Activated CD4-positive, alpha-beta T cell treated with anti-CD3 and anti-CD28 coated beads for 36 hours (primary cell): ENCODE measurements at regions of chr17 and their contacts with region 1.

Region 1: GRCh38 chr17:60392042-60392844 is at the start of gene USP32:
- DNase-seq: peak; percentile 99
- ATAC-seq: peak; percentile 93
- H3K4me3 Mint-ChIP-seq: peak within 1 kb of the TSS; percentile 77
- H3K27ac Mint-ChIP-seq: peak within 1 kb of the TSS; percentile 99
- H3K4me1 Mint-ChIP-seq: peaks cover 41% of the 10 kb centered on the region
- H3K27me3 Mint-ChIP-seq: no peaks in the 10 kb centered on the region
- total RNA-seq, gene USP32: 32.3 to 33.1 TPM

Region 2: DNA sequence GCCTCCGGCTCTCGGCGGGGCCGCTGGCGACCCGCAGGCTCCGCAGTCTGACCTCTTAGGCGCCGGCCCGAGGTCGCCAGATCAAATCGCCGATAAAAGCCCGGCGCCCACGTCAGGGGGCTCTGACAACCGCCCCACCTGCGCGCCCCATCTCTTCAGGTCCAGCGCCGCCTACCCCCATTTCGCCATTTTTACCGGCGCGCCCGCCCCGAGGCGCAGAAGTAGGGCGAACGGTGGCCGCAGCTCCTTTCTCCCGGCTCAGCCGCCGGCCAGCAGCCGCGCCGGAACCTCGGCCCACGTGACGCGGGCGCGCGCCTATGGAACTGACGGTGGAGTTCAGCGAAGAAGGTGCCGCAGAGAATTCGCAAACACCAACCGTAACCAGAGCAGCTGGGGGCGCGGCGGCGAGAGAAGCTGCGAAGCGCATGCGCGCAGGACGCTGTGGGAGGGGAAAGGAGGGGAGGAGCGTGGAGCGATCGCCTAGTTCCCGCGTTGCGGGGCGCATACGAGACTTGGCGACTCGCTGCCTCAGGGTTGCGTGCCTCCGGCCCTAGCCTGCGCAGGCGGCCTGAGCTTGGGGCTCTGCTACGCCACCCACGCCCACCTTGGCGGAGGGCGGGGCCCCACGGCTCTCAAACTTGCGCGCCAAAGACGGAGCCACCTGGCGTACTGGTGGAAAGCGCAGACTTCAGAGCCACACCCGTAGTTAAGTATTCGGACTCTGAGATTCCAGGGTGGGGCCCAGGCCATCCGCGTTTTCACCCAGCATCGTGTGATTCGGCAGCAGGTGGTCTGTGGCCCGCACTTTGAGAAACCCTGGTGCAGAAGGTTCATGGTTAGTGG is 1285.6 kb before region 1 on chr17 and contains the start of gene TRIM37:
- CTCF ChIA-PET with region 1: no interaction called
- POLR2A ChIA-PET with region 1: no interaction called
- intact Hi-C with region 1: loop called in 1 of 2 experiments (anchors 1 kb)
- DNase-seq: peak; percentile 99
- ATAC-seq: peak; percentile 95
- H3K4me3 Mint-ChIP-seq: peak within 1 kb of the TSS; percentile 85
- H3K27ac Mint-ChIP-seq: peak within 1 kb of the TSS; percentile 92
- H3K4me1 Mint-ChIP-seq: peaks cover 49% of the 10 kb centered on the region
- H3K27me3 Mint-ChIP-seq: no peaks in the 10 kb centered on the region
- total RNA-seq, gene TRIM37: 21.3 to 22.7 TPM

Region 3: DNA sequence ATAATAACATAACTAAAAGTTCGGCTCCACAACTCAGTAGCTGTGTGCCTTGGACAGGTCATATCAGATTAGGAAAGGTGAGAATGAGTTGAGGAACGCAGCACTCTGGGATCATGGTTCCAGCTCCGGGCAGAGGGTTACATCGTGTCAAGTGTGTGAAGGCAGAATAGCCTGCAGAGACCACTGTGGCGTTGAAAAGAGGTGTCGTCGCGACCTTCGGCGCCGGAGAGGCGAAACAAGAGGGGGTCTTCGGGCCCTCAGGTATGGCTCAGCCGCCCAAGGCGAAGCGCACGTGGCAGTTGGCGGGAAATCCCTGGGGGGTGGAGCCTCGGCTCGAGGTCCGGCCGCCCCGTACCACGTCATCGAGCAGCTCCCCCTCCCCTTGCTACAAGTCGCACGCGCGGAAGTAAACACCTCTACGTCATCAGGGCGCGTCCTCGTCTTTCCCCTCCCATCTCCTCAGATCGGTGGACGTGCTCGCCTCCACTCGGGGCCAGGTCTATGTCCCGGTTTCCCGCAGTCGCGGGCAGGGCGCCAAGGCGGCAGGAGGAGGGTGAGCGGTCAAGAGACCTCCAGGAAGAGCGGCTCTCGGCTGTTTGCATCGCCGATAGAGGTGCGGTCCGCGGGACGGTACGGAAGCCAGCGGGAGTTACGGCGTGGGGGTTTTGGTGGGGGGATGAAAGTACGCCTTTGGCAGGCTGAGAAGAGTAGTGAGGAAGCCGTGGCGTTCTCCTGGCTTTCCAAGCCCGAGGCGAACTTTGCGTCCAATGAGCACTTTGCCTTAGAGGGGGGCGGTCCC is 826.9 kb before region 1 on chr17 and contains the start of gene DHX40:
- CTCF ChIA-PET with region 1: no interaction called
- POLR2A ChIA-PET with region 1: no interaction called
- intact Hi-C with region 1: loop called in 1 of 2 experiments (anchors 1 kb)
- DNase-seq: peak; percentile 98
- ATAC-seq: peak; percentile 89
- H3K4me3 Mint-ChIP-seq: peak within 1 kb of the TSS; percentile 99
- H3K27ac Mint-ChIP-seq: peak within 1 kb of the TSS; percentile 99
- H3K4me1 Mint-ChIP-seq: peaks cover 20% of the 10 kb centered on the region
- H3K27me3 Mint-ChIP-seq: no peaks in the 10 kb centered on the region
- total RNA-seq, gene DHX40: 22.9 to 24.1 TPM

Region 4: DNA sequence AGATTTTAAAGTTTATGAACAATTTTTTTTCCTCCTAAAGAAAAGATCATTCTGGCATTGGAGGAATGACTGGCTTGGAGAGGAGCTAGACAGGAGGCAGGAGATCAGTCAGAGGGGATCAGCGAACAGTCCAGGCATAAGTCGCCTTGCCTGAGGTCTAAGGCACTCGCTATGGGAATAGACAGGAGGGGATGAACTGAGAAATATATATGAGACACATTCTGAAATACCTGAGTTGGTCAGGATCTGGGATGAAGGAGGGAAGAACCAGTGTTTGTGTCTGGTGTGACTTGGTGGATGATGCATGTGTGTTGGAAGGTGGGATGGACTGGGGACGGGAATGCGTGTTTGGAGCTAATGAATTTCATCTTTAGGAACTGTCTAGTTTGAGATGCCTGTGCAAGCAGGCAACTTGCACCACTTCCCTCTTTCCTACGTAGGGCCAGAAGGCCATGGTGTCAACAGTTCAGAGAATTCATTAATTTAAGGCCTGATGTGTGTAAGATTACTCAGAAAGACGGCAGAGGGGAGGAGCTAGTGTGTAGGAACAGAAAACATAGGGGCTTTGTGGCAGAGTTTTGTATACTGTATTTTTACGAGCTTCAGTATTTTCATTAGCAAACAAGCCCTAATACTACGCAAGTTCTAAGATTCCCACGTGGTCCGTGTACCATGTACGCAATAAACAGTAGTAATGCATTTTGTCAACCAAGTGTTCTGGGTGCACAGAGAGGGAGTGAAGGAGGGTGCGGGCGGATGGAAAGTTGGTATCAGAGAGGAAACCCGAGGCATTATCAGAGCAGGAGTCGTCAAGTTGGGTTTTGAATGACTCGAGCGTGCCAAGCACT is 314.3 kb before region 1 on chr17:
- CTCF ChIA-PET with region 1: no interaction called
- POLR2A ChIA-PET with region 1: no interaction called
- intact Hi-C with region 1: loop called in 1 of 2 experiments (anchors 1 kb)
- DNase-seq: peak; percentile 81
- ATAC-seq: peak; percentile 73
- H3K4me3 Mint-ChIP-seq: peak overlapping the region; percentile 84
- H3K27ac Mint-ChIP-seq: peak overlapping the region; percentile 95
- H3K4me1 Mint-ChIP-seq: peaks cover 19% of the 10 kb centered on the region
- H3K27me3 Mint-ChIP-seq: no peaks in the 10 kb centered on the region

Region 5: DNA sequence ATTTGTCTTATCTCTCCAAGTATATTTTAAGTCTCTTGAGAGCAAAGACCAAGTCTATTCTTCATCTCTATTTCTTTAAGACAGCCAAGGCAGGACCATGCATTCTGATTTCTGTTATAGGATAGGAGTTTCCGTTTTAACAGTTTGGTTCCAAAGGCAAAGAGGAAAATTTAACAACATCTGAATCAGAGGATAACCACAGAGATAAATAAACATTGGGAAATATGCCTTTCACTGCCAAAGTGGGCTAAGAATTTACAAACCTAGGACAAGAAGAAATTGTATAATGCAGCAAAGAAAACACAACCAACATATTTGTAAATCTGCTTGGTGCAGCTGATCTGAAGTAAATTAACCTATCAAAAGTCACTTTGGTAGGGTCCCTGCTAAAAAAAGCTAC is 38.0 kb before region 1 on chr17:
- CTCF ChIA-PET with region 1: interaction called, 3 read pairs
- POLR2A ChIA-PET with region 1: interaction called, 4 read pairs
- intact Hi-C with region 1: loop called (anchors 1 to 2 kb)
- DNase-seq: no peak
- ATAC-seq: no peak
- H3K4me3 Mint-ChIP-seq: no peak overlapping the region
- H3K27ac Mint-ChIP-seq: peak overlapping the region; percentile 70
- H3K4me1 Mint-ChIP-seq: peaks cover 43% of the 10 kb centered on the region
- H3K27me3 Mint-ChIP-seq: no peaks in the 10 kb centered on the region

Region 6: DNA sequence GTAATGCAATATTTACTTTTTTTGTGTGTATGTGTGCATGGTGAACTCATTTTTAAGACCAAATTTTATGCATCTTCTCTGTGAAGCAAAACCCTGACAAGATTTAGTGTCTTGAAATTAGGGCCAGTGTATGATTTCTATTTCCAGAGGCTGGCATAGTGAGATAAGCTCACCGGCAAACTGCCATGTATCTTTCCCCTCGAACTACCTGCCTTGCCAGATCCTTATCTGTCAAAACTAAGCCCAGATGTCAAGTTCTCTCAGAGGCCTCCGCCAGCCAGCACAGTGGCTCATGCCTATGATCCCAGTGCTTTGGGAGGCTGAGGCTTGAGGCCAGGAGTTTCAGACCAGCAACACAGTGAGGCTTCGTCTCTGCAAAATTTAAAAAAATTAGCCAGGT is 10.3 kb before region 1 on chr17:
- CTCF ChIA-PET with region 1: no interaction called
- POLR2A ChIA-PET with region 1: no interaction called
- intact Hi-C with region 1: no loop called
- DNase-seq: no peak
- ATAC-seq: no peak
- H3K4me3 Mint-ChIP-seq: no peak overlapping the region
- H3K27ac Mint-ChIP-seq: no peak overlapping the region
- H3K4me1 Mint-ChIP-seq: peaks cover 29% of the 10 kb centered on the region
- H3K27me3 Mint-ChIP-seq: no peaks in the 10 kb centered on the region

Region 7: DNA sequence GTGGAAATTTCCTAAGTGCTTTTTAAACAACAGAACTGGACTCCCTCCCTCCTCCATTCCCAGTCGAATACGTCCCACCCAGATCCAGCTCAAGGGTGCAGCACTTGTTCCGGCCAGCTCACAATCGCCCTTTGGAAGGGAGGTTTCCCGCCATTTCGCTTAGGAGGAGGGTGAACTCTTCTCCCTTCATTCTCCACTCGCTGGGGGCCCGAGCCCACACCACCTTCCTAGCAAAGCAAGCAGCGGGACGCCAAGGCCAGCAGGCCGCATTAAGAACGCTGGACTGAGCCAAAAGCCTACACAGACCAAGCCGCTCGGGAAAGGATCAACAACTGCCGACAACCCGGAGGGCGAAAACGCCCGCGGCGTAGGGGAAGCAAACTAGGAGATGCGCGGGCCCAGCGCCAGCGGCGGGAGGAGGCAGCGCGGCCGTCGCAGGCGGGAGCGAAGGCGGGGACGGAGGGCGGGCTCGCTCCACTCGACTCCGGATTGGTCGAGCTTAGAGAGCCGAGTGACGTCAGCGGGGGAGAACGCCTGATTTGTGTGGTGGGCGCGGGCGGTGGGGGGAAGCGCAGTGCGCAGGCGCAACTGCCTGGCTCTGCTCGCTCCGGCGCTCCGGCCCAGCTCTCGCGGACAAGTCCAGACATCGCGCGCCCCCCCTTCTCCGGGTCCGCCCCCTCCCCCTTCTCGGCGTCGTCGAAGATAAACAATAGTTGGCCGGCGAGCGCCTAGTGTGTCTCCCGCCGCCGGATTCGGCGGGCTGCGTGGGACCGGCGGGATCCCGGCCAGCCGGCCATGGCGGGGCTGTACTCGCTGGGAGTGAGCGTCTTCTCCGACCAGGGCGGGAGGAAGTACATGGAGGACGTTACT is 207.6 kb after region 1 on chr17 and contains the start of gene PPM1D:
- CTCF ChIA-PET with region 1: no interaction called
- POLR2A ChIA-PET with region 1: interaction called, 3 read pairs
- intact Hi-C with region 1: loop called (anchors 1 to 2 kb)
- DNase-seq: peak; percentile 99
- ATAC-seq: peak; percentile 94
- H3K4me3 Mint-ChIP-seq: peak within 1 kb of the TSS; percentile 95
- H3K27ac Mint-ChIP-seq: peak within 1 kb of the TSS; percentile 97
- H3K4me1 Mint-ChIP-seq: peaks cover 31% of the 10 kb centered on the region
- H3K27me3 Mint-ChIP-seq: no peaks in the 10 kb centered on the region
- total RNA-seq, gene PPM1D: 9.3 to 9.7 TPM

Region 8: DNA sequence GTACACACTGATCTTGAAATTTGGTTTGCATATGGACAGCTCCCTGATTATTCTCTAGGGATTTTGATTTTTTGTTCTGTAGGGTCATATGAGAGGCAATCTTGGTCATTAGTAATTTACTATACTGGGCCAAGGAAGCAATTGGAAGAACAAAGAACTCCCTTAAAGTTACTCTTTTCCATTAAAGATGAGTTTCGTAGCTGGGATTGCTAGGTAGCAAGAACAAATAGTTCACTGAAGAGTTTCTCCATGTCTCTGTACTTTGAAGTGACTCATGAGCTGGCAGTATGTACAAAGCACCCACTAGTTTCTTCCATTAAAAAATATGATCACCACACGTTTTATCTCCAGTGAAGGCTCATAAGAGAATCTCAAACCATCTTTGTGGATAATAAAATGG is 279.2 kb after region 1 on chr17:
- CTCF ChIA-PET with region 1: no interaction called
- POLR2A ChIA-PET with region 1: no interaction called
- intact Hi-C with region 1: no loop called
- DNase-seq: no peak
- ATAC-seq: no peak
- H3K4me3 Mint-ChIP-seq: no peak overlapping the region
- H3K27ac Mint-ChIP-seq: no peak overlapping the region
- H3K4me1 Mint-ChIP-seq: no peaks in the 10 kb centered on the region
- H3K27me3 Mint-ChIP-seq: no peaks in the 10 kb centered on the region